AG04449 (cell line): ENCODE measurements at regions of chr2 and their contacts with region 1.

Region 1: GRCh38 chr2:237572021-237572741 is 5.8 kb downstream of the PRLH start:
- DNase-seq: peak; percentile 59
- H3K4me3 ChIP-seq: 0 out of 2 replicates have a peak overlapping the region, but pooled peaks have one; percentile 6
- CTCF ChIP-seq: peak; percentile 100

Region 2: GRCh38 chr2:237122214-237122666 is 449.9 kb before region 1 on chr2:
- CTCF ChIA-PET with region 1: interaction called, 88 read pairs
- POLR2A ChIA-PET with region 1: no interaction called
- DNase-seq: no peak
- H3K4me3 ChIP-seq: no peak overlapping the region
- CTCF ChIP-seq: peak; percentile 63

Region 3: DNA sequence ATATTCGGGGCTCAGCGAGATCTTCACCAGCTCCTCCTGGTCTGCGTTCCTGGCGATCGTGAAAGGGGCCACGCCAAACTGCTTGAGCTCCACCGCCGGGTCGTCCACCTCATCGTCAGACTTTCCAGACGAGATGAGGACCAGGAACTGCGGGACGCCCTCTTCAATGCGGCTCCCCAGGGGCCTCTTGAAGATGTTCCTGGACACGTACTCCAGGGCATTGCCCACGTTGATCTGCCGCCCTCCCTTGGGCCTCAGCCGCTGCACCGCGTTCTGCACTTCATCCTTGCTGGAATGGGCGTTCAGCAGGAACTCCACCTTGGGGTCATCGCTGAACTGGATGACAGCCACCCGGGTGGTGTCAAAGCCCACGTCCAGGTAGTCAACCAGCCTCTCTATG is 200.3 kb before region 1 on chr2:
- CTCF ChIA-PET with region 1: interaction called, 11 read pairs
- POLR2A ChIA-PET with region 1: no interaction called
- DNase-seq: no peak
- H3K4me3 ChIP-seq: no peak overlapping the region
- CTCF ChIP-seq: no peak

Region 4: DNA sequence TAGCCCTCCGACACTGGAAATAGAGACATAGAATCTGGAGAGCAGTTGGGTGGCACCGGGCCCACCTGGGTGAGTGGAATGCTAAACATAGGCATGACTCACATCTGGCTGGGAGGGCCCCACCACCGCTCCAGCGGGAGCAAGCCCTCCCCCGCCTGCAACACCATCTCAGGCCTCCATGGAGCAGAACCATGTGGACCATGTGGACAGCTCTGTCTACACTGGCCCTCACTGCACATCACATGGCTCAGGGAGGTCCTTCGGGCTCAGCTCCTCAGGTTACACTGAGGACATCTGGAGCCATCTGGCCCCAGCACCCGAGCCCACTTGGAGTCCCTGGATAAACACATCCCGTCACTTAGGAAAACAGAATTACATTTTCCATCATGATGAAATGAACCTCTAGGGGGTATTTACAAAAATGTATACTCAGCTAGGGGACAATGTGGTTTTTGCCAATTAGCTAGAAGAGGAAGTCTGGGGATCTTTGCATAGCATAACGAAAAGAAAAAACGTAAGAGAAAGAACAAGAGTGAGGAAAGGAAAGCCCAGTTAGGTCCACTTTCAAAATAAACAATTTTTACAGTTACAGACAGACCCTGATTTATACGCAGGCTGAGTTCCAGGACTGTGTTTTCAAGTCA is 115.9 kb before region 1 on chr2:
- CTCF ChIA-PET with region 1: interaction called, 15 read pairs
- POLR2A ChIA-PET with region 1: no interaction called
- DNase-seq: peak; percentile 59
- H3K4me3 ChIP-seq: no peak overlapping the region
- CTCF ChIP-seq: no peak

Region 5: DNA sequence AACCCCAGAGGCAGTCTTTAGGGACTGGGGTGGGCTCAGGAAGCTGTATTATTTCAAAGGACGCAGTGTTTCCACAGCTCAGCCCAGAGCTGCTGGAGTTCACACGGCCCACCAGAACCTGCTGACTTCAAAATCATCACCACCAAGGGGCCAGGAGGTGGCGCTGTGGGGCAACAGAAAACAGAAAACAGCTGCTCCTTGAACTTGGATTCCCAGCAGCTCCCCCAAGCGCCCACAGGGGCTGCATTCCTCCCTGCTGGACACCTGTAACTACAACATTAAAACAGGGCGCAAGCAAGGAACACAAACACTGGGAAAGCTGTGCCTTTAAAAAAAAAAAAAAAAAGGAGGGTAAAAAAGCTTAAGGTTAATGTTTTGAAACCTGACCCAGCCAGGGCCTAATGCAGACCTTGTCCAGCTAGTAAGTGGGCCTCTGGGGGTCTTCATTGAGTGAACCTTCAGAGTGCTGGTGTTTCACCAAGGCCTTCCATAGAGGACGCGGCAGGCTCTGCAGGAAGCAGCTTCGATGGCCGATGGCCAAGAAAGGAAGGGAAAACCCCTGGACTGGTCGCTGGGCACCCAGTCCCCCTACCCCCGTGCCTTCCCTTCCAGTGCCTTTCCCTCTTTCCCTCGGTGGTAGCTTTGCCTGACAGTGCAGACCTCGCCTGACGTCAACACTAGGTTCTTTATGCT is 59.3 kb before region 1 on chr2:
- CTCF ChIA-PET with region 1: interaction called, 291 read pairs
- POLR2A ChIA-PET with region 1: interaction called, 6 read pairs
- DNase-seq: no peak
- H3K4me3 ChIP-seq: no peak overlapping the region
- CTCF ChIP-seq: peak; percentile 87

Region 6: DNA sequence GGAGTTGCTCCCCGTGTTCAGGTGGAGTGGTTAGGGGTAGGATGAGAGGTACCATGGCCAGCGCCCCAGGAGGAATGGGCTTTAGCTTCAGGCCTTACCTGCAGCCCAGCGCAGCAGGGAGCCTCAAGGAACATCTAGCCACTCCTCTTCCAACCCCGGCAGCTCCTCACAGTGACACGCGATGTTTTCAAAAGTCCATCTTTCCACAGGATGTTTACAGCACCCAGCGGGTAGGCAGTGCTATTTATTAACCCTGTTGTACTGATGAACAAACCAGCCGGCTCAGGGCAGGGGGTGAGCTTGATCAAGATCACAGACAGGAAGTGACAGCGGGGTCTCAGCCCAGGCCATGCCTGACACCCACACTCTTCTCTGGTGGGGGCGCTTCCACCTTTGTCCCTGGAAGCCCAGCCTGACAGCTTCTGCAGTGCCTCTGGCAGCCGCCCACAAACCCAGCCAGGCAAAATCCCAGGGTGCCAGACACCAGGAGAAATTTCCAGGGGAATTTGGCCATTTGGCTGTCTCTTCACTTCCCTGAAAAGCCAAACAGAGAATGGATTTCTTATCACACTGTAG is 24.3 kb before region 1 on chr2:
- CTCF ChIA-PET with region 1: interaction called, 39 read pairs
- POLR2A ChIA-PET with region 1: no interaction called
- DNase-seq: no peak
- H3K4me3 ChIP-seq: no peak overlapping the region
- CTCF ChIP-seq: no peak